Posterior vena cava (tissue), 2 donors: ENCODE measurements at regions of chr5 and their contacts with region 1.

Region 1: GRCh38 chr5:89179731-89180130 is 296.7 kb upstream of the MEF2C start:
- DNase-seq: no peak

Region 2: DNA sequence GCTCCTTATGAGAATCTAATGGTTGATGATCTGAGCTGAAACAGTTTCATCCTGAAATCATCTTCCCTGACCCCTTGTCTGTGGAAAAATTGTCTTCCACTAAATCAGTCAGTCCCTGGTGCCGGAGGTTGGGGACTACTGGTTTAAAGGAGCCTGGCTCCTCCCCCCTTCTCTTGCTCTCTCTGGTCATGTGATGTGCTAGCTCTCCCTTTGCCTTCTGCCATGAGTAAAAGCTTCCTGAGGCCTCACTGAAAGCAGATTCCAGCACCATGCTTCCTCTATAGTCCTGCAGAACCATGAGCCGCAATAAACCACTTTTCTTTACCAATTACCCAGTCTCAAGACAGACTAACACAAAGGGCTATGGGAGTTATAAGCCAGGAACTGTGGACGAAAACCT is 1857.4 kb before region 1 on chr5:
- intact Hi-C with region 1: loop called in 1 of 2 experiments (anchors 5 kb)
- DNase-seq: no peak

Region 3: DNA sequence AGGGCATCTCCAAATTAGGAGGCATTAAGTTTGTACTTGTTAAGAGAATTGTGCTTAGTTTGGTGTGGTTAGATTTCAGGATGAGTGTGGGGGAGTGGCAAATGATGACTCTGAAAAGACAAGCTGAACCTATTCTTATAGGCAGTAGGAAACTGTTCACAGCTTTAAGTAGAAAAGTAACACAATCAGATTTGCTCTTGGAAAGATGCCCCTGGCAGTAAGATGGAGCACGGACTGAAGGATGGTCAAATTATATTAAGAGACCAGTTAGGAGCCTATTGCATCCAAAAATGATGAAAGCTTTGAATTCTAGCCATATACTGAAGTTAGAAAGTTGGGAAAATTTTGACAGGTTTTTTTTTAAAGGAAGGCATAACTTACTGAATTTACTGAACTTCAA is 42.6 kb before region 1 on chr5:
- intact Hi-C with region 1: no loop called
- DNase-seq: no peak

Region 4: GRCh38 chr5:89255845-89256463 is 76.2 kb after region 1 on chr5:
- intact Hi-C with region 1: no loop called
- DNase-seq: no peak

Region 5: GRCh38 chr5:90461292-90461691 is 1281.6 kb after region 1 on chr5:
- intact Hi-C with region 1: loop called in 1 of 2 experiments (anchors 5 kb)
- DNase-seq: no peak